Psoas muscle (tissue), 8 donors: ENCODE measurements at regions of chr9 and their contacts with region 1.

Region 1: DNA sequence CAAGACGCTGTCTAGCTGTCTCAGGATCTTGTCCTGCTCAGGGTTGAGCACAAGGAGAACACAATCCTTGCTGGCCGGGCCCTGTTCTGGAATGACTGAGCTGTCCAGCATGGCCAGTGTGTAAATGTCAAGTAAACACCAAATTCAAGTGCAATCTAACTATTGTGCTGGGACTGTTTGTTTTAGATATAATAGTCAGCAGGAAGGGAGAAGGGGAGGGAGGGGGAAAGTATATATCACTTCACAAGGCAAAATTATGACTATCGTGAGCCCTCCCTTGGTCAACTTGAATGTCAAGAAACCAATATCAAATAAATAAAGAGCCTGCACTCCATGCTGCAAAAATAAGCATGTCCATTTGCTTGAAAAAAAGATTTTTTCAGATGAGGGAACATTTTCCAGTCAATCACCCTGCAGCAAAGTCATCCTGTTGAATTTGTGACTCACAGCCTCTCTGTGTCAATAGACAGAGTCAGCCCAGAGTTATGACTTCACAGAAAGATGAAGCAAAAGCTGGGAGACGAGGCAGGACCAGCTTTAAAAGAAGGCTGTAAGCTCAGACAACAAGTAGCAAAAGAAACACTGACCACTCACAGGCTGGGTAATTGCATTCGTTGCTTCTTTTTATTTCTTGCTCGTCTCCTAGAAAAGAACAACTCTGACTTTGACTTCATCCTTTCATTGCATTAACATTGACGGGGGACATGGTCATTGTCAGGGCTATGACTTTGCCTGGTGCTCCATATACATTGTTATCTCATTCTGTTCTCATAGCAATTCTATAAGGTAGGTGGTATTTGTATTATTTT is 15.2 kb upstream of the KLF4 start:
- DNase-seq: no peak
- ATAC-seq: no peak
- H3K4me3 ChIP-seq: no peak overlapping the region
- H3K27ac ChIP-seq: no peak overlapping the region
- H3K4me1 ChIP-seq: no peaks in the 10 kb centered on the region
- H3K27me3 ChIP-seq: no peaks in the 10 kb centered on the region
- CTCF ChIP-seq: no peak

Region 2: GRCh38 chr9:107566611-107567061 is 61.9 kb after region 1 on chr9:
- intact Hi-C with region 1: loop called in 1 of 2 experiments (anchors 10 kb)
- DNase-seq: no peak
- ATAC-seq: no peak
- H3K4me3 ChIP-seq: no peak overlapping the region
- H3K27ac ChIP-seq: no peak overlapping the region
- H3K4me1 ChIP-seq: no peaks in the 10 kb centered on the region
- H3K27me3 ChIP-seq: no peaks in the 10 kb centered on the region
- CTCF ChIP-seq: no peak